Naive thymus-derived CD4-positive, alpha-beta T cell (primary cell): ENCODE measurements at regions of chr12 and their contacts with region 1.

Region 1: DNA sequence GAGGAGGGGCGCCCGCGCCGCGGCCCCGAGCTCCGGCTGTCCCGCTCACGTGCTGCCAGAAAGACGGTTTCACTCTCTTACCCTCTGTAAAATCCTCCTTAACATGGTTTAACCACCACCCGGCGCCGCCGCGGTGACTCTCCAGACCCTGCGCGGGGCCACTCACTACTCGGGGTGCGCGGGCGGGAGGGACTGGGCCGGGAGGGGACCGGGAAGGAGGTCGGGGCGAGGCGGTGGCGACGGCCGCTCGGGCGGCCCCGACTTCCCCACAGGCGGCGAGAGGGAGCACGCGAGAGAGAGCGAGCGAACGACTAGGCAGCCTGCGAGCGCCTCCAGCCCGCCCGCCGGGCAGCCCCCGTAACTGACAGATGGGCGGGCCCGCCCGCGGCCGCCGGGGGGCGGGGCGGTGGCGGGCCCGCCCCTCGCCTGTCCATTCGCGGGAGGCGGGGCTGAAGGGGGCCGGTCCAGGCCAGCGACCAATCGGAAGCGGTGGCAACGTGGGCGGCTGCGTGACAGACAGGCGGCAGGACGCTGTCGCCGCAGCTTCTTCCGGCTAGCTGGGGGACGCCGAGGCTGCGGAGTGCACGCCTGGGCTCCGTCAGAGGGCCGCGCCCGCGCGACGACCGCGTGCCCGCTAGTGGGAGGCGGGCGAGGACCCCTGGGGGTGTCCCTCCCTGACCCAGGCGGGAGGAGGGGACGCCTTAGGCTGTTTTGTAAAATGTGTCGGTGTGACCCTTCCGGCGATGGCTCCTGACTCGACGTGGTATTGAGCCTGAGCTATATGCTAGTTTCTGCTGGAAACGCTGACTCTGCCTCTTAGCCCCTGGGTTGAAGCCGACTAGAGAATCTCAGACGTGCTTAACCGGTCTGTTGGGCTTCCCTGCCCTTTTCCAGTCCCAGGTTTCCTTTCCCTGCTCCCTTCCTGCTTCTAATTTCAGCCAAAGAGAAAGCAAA is at the start of gene EEA1:
- DNase-seq: peak; percentile 89 to 96 (median 91)
- ATAC-seq: peak; percentile 93
- H3K4me3 ChIP-seq: peak within 1 kb of the TSS; percentile 71
- H3K4me3 Mint-ChIP-seq: peak within 1 kb of the TSS; percentile 75 to 94 (median 91)
- H3K27ac ChIP-seq: peak within 1 kb of the TSS; percentile 96
- H3K27ac Mint-ChIP-seq: peak within 1 kb of the TSS; percentile 89 to 99 (median 93)
- H3K4me1 ChIP-seq: peaks cover 19 to 23% of the 10 kb centered on the region in 2 donors
- H3K4me1 Mint-ChIP-seq: peaks cover 20 to 53% (median 37%) of the 10 kb centered on the region in 7 donors
- H3K27me3 ChIP-seq: no peaks in the 10 kb centered on the region
- H3K27me3 Mint-ChIP-seq: peaks cover 0 to 6% (median 0%) of the 10 kb centered on the region in 5 donors
- total RNA-seq, gene EEA1: 20.9 to 28.3 (median 27.9) TPM

Region 2: DNA sequence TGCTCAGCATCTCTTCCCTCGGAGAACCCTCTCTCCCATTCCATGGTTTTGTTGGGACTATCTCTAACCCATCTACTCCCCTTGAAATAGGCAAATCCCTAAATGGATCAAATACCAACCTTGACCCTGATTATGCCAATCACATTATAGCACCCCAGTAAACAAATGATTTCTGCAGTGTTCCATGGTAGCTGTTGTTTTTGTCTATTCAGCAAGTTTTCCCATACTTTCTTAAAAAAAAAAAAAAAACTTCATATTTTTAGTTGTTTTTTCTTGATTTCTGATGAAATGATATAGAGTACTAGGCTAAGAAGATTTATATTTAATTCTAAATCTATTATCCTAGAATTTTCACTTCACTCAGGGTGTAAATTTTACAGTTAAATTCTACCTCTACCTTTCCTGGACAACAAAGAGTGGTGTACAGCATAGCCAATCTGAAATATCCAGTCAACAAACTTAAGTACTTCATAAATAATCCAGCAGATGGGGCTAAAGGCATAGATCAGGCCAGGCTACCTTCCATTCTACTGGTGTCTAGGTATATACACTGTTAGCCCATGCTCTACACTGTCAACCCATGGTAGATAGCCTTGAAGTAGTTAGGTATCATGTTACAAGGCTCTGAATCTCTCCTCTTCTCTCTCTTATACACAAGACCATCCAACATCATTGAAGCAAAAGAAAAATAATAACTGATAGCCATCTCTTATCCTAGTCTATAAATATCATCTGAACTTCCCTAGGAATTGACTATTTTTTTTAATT is 144.3 kb before region 1 on chr12:
- CTCF ChIA-PET with region 1: interaction called, 9 read pairs
- POLR2A ChIA-PET with region 1: interaction called, 6 read pairs
- intact Hi-C with region 1: loop called (anchors 1 to 2 kb)
- DNase-seq: peak in 7 of 9 donors; percentile 61 to 80 (median 70)
- ATAC-seq: peak; percentile 99
- H3K4me3 ChIP-seq: no peak overlapping the region
- H3K4me3 Mint-ChIP-seq: no peak overlapping the region
- H3K27ac ChIP-seq: no peak overlapping the region
- H3K27ac Mint-ChIP-seq: peak overlapping the region in 1 of 9 donors; percentile 0
- H3K4me1 ChIP-seq: no peaks in the 10 kb centered on the region
- H3K4me1 Mint-ChIP-seq: peaks cover 4 to 19% (median 9%) of the 10 kb centered on the region in 7 donors
- H3K27me3 ChIP-seq: no peaks in the 10 kb centered on the region
- H3K27me3 Mint-ChIP-seq: no peaks in the 10 kb centered on the region

Region 3: DNA sequence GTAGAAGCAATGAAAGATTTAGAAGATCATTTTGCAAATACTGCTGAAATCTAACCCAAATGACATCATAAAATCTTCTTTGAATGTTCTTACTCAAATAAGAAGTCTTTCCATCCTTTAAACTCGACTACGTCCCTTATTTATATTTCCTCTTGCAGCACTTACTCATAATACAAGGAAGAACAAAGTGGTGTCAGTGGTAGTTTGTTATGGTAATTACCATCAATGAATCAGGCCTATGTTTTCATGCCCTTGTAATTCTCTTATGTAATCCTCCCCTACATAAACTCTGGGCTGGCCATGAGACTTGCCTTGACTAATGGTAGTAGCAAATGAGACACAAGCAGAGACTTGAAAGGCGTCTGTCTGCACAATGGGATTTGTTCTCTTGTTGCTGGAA is 17.2 kb before region 1 on chr12:
- CTCF ChIA-PET with region 1: interaction called, 52 read pairs
- POLR2A ChIA-PET with region 1: interaction called, 127 read pairs
- intact Hi-C with region 1: loop called (anchors 1 kb)
- DNase-seq: peak in 1 of 9 donors; percentile 28
- ATAC-seq: peak; percentile 74
- H3K4me3 ChIP-seq: no peak overlapping the region
- H3K4me3 Mint-ChIP-seq: peak overlapping the region; percentile 20 to 68 (median 56)
- H3K27ac ChIP-seq: peak overlapping the region; percentile 30
- H3K27ac Mint-ChIP-seq: peak overlapping the region; percentile 58 to 96 (median 85)
- H3K4me1 ChIP-seq: peaks cover 6 to 33% of the 10 kb centered on the region in 2 donors
- H3K4me1 Mint-ChIP-seq: peaks cover 36 to 76% (median 61%) of the 10 kb centered on the region in 7 donors
- H3K27me3 ChIP-seq: no peaks in the 10 kb centered on the region
- H3K27me3 Mint-ChIP-seq: no peaks in the 10 kb centered on the region

Region 4: DNA sequence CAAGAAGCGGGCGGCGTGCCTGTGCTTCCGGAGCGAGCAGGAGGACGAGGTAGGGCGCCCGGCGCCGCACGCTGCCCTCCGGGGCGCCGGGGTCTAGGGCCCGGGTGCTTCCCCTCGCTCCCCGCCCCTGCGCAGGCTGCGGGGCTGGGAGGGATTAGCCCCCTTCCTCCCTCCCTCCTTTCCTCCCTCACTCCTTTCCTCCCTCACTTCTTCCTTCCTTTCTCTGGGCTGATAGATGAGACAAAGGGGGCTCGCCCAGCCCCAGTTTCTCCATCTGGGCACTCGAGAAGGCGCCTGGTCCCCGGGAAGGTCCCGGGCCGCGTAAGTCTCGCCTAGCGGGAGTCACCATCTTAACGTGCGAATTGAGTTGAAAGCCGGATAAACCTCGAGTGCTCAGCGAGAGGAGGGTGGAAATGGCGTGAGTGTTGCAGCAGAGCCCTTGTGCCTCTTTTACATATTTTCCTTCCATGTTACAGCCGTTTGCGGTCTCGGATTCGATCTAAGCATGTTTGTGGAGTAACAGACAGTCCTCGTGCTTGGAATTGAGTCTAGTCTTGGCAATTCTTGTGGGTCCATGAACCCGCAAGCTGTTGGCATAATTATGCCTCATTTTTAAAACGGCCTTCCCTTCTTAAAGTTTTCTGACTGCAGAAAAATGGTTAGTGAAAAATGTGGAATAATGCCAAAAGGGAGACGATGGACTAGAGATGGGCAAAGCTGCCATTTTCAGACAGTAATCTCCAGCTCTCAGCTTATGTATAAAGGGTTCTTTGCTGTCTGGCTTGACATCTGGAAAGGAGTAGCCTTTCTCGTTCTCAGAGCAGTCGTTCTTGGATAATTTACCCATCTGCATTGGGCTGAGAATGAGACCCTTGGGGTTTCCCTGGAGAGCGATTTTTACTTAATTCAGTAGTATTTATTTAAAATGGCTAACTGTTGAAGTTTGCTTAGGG is 449.4 kb after region 1 on chr12:
- CTCF ChIA-PET with region 1: interaction called, 3 read pairs
- POLR2A ChIA-PET with region 1: interaction called, 4 read pairs
- intact Hi-C with region 1: loop called (anchors 1 kb)
- DNase-seq: peak; percentile 47 to 73 (median 69)
- ATAC-seq: peak; percentile 60
- H3K4me3 ChIP-seq: peak overlapping the region; percentile 76
- H3K4me3 Mint-ChIP-seq: peak overlapping the region; percentile 98 to 100 (median 99)
- H3K27ac ChIP-seq: peak overlapping the region; percentile 94
- H3K27ac Mint-ChIP-seq: peak overlapping the region; percentile 94 to 100 (median 99)
- H3K4me1 ChIP-seq: peaks cover 19 to 22% of the 10 kb centered on the region in 2 donors
- H3K4me1 Mint-ChIP-seq: peaks cover 34 to 62% (median 51%) of the 10 kb centered on the region in 7 donors
- H3K27me3 ChIP-seq: no peaks in the 10 kb centered on the region
- H3K27me3 Mint-ChIP-seq: no peaks in the 10 kb centered on the region

Region 5: GRCh38 chr12:93467351-93468007 is 538.2 kb after region 1 on chr12 and contains the start of gene MRPL42:
- CTCF ChIA-PET with region 1: no interaction called
- POLR2A ChIA-PET with region 1: no interaction called
- intact Hi-C with region 1: loop called in 1 of 2 experiments (anchors 1 kb)
- DNase-seq: peak; percentile 86 to 96 (median 94)
- ATAC-seq: peak; percentile 97
- H3K4me3 ChIP-seq: peak within 1 kb of the TSS; percentile 94
- H3K4me3 Mint-ChIP-seq: peak within 1 kb of the TSS; percentile 85 to 96 (median 93)
- H3K27ac ChIP-seq: peak within 1 kb of the TSS; percentile 85
- H3K27ac Mint-ChIP-seq: peak within 1 kb of the TSS; percentile 90 to 98 (median 95)
- H3K4me1 ChIP-seq: peaks cover 8 to 10% of the 10 kb centered on the region in 2 donors
- H3K4me1 Mint-ChIP-seq: peaks cover 28 to 48% (median 36%) of the 10 kb centered on the region in 7 donors
- H3K27me3 ChIP-seq: no peaks in the 10 kb centered on the region
- H3K27me3 Mint-ChIP-seq: no peaks in the 10 kb centered on the region
- total RNA-seq, gene MRPL42: 30.1 to 65.8 (median 45.6) TPM